ENCODE measurements at regions of chr9 and their contacts with region 1.

Region 1: DNA sequence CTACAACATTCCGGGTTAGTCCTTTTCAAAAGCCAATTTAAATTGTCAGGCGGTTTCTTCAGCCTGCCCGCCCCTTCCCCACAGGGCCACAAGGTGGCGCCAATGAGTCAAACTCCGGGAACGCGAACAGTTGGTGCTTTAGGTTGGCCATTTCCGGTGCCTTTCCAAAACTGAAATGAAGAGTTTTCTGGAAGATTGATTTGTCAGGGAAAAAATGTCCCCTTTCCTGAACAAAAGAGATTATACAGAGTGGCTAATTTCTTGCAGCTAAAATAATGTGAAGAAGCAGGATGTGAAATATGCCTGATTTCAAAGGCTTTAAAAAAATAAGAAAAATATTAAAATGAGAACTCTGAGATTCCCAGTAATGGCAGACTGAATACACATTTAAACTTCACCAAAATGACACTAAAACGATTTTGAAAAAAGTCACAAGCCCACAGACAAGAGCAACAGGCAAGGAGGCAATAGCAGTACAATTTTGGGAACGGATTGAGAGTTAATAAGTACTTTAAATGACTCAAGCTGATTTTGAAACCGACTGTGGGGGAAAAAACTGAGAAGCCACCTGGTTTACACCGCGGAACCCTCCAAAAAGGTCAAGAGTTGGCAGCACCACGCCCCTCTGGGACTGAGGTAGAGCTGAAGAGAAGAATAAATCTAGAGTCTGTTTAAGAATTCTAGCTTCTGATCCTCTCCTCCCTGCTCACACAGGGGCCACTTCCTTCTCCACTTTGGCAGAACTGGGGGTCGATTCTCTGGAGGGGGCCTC is 45.7 kb downstream of the SLC46A2 start:
- DNase-seq: peak; percentile 87
- H3K4me3 ChIP-seq: no peak overlapping the region
- H3K27ac ChIP-seq: no peak overlapping the region
- H3K4me1 ChIP-seq: no peaks in the 10 kb centered on the region
- H3K27me3 ChIP-seq: no peaks in the 10 kb centered on the region
- CTCF ChIP-seq: peak; percentile 99

Region 2: GRCh38 chr9:112819635-112820496 is 25.1 kb before region 1 on chr9:
- CTCF ChIA-PET with region 1: no interaction called
- POLR2A ChIA-PET with region 1: no interaction called
- intact Hi-C with region 1: no loop called
- DNase-seq: peak; percentile 71
- H3K4me3 ChIP-seq: no peak overlapping the region
- H3K27ac ChIP-seq: no peak overlapping the region
- H3K4me1 ChIP-seq: no peaks in the 10 kb centered on the region
- H3K27me3 ChIP-seq: no peaks in the 10 kb centered on the region
- CTCF ChIP-seq: peak; percentile 72

Region 3: GRCh38 chr9:112898872-112899311 is 53.9 kb after region 1 on chr9:
- CTCF ChIA-PET with region 1: interaction called, 4 read pairs
- POLR2A ChIA-PET with region 1: no interaction called
- intact Hi-C with region 1: loop called (anchors 1 kb)
- DNase-seq: no peak
- H3K4me3 ChIP-seq: no peak overlapping the region
- H3K27ac ChIP-seq: no peak overlapping the region
- H3K4me1 ChIP-seq: no peaks in the 10 kb centered on the region
- H3K27me3 ChIP-seq: peaks cover 29% of the 10 kb centered on the region
- CTCF ChIP-seq: no peak

Measured in A673 (cell line).